ENCODE measurements at regions of chr2 and their contacts with region 1.

Region 1: DNA sequence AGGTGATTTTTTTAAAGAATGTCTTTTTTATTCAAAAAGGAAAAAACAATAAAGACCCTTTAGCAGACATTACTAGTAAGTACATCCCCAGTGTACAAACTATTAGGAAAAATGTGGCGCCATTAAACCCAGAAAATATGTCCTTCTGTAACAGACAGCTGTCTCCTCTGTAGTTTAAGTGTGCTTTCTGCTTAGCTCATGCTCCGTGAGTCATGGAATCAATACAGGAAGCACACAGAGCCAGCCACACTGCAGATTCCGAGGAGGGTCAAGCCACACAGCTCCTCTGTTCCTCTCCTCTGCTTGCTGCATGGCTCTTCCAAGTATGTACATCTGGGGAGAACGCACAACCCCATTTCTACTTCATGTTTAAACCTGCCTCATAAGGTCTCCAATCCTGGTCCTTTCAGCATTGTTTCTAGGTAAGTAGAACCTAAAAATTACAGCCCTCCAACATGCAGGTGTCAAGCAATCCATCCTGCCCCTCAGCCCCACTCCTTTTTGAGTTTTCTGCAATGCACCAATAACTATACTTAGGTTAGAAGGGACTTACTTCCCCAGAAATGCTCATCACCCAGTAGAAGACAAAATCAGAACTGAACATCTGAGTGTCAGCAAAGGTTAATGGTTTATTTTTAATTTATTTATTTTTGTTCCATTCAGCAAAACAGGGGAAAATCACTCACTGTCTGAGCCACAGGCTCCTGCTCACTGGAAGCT is 37.5 kb downstream of the ACVR1 start:
- DNase-seq: peak; percentile 73
- H3K4me3 Mint-ChIP-seq: peak overlapping the region; percentile 36
- H3K27ac Mint-ChIP-seq: peak overlapping the region; percentile 88
- H3K4me1 Mint-ChIP-seq: peaks cover 80% of the 10 kb centered on the region
- H3K27me3 Mint-ChIP-seq: no peaks in the 10 kb centered on the region
- CTCF ChIP-seq: no peak

Region 2: GRCh38 chr2:157741819-157742484 is 96.7 kb before region 1 on chr2:
- CTCF ChIA-PET with region 1: no interaction called
- intact Hi-C with region 1: no loop called
- DNase-seq: no peak
- H3K4me3 Mint-ChIP-seq: no peak overlapping the region
- H3K27ac Mint-ChIP-seq: no peak overlapping the region
- H3K4me1 Mint-ChIP-seq: no peaks in the 10 kb centered on the region
- H3K27me3 Mint-ChIP-seq: no peaks in the 10 kb centered on the region
- CTCF ChIP-seq: no peak

Region 3: DNA sequence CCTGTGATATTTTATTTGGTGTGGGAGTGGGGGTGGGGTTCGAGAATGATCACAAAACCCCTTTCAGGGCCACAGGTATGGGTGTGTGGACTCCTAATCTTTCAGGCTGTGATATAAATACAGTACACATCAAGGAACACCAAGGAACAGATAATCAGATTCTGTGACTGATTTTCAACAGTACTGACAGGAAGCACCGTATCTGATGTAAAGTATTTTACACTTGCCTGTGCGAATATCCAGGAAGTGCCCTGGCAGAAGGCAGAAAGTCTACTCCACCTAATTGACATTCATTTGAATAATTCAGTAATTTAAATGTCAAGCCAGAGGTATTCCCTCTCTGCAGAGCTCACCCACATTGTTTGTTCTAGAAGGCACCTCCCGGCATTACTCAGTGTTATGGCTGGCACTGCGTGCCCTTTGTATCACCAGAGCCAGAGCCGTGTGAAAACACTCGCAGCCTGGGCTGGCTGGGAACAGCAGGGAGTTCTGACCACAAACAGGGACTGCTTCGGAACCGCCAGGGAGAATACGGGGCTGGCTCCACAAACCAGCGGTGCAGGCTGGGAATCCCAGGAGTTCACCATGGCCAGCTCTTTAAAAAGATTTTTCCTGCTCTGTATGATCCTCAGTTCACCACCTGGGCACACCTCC is 54.3 kb before region 1 on chr2:
- CTCF ChIA-PET with region 1: interaction called, 5 read pairs
- intact Hi-C with region 1: loop called (anchors 2 kb)
- DNase-seq: peak; percentile 54
- H3K4me3 Mint-ChIP-seq: peak overlapping the region; percentile 61
- H3K27ac Mint-ChIP-seq: peak overlapping the region; percentile 85
- H3K4me1 Mint-ChIP-seq: peaks cover 70% of the 10 kb centered on the region
- H3K27me3 Mint-ChIP-seq: no peaks in the 10 kb centered on the region
- CTCF ChIP-seq: no peak

Region 4: DNA sequence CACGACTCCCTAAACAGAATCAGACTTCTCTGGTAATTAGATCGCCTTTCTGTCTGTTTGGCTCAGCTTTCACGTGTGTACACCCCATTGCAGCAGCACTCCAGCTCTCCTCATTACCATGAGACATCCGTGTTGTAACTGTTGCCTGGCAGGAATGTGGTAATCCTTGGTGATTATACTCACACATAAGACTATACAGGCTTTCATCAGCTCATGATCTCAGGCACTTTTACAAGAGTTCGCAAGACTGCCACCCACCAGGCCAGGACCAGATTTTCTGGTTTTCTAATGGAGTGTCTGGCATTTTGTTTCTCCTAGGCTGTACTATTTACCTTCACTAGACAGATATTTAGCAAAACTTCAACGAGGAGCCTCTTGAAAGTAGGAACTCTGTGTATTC is 12.7 kb before region 1 on chr2:
- CTCF ChIA-PET with region 1: no interaction called
- intact Hi-C with region 1: loop called (anchors 2 kb)
- DNase-seq: peak; percentile 57
- H3K4me3 Mint-ChIP-seq: peak overlapping the region; percentile 32
- H3K27ac Mint-ChIP-seq: peak overlapping the region; percentile 91
- H3K4me1 Mint-ChIP-seq: peaks cover 32% of the 10 kb centered on the region
- H3K27me3 Mint-ChIP-seq: no peaks in the 10 kb centered on the region
- CTCF ChIP-seq: no peak

Region 5: DNA sequence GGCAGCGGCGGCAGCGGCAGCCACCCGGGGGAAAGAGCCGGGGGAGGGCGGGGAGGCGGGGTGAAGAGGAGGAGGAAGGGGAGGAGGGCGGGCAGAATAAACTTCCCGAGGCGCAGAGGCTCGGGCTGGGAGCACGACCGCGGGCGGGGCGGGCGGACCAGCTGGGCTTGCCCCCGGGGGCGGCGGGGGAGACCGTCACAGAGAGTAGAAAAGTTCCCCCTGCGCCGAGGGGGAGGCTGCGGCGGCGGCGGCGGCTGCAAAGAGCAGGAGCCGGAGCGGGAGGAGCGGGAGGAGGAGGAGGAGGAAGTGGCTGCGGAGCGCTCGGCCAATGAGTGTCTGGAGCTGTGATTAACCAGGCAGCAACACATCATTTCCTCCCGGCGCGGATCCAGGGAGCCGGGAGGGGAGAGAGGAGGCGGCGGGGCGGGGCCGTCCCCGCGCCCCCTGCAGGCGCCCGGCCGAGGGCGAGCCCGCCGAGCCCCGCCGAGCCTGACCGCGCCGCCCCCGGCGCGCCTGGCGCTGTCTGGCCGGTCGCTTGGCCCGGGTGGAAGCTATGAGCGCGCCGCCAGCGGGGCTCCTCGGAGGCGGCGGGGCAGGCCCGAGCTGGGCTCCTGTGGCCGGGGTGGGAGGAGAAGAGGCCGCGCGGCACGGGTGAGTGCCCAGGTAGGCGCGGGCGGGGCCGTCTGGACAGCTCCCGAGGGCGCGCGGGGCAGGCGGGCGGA is 37.6 kb after region 1 on chr2 and contains the start of gene ACVR1:
- CTCF ChIA-PET with region 1: interaction called, 7 read pairs
- intact Hi-C with region 1: loop called (anchors 5 kb)
- DNase-seq: peak; percentile 93
- H3K4me3 Mint-ChIP-seq: peak within 1 kb of the TSS; percentile 91
- H3K27ac Mint-ChIP-seq: peak within 1 kb of the TSS; percentile 62
- H3K4me1 Mint-ChIP-seq: peaks cover 69% of the 10 kb centered on the region
- H3K27me3 Mint-ChIP-seq: no peaks in the 10 kb centered on the region
- CTCF ChIP-seq: no peak
- total RNA-seq, gene ACVR1: 62.0 and 71.3 TPM in 2 replicates